CD4-positive, alpha-beta T cell (primary cell): ENCODE measurements at regions of chr18 and their contacts with region 1.

Region 1: GRCh38 chr18:77101410-77102258 is 30.9 kb downstream of the MBP start:
- DNase-seq: peak in 6 of 14 experiments; percentile 29 to 77 (median 64)
- ATAC-seq: peak; percentile 15
- H3K4me3 ChIP-seq: peak overlapping the region; percentile 25
- H3K4me3 Mint-ChIP-seq: peak overlapping the region; percentile 77
- H3K27ac ChIP-seq: peak overlapping the region; percentile 74 to 89
- H3K27ac Mint-ChIP-seq: peak overlapping the region; percentile 97
- H3K4me1 ChIP-seq: peaks cover 95% of the 10 kb centered on the region
- H3K4me1 Mint-ChIP-seq: peaks cover 96% of the 10 kb centered on the region
- H3K27me3 ChIP-seq: no peaks in the 10 kb centered on the region
- H3K27me3 Mint-ChIP-seq: no peaks in the 10 kb centered on the region
- CTCF ChIP-seq: no peak

Region 2: DNA sequence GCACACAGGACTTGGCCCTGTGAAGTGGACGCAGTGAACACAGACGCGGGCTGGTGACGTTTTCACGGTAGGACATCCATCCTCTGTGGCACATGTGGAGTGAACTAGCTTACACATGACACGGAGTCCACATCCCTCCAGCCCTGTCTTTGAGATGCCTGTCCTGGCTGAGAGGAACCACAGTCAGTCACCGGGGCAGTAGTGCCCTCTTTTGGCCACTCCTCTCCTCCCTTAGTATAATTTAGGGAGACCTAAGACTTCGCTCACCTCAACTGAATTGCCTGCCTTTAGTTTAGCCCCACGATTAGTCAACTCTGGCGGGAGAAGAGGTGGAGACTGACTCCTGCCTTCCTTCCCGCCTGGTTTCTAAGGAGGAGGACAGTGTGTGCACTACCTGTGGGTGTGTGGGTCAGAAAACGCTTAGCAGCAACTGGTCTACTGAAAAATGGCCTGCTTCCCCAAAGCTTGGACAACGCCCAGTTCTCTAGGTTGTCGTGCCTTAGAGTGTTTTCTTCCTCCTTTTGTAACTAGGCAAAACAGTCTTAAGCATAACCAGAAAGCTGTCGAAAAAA is 39.6 kb before region 1 on chr18:
- CTCF ChIA-PET with region 1: interaction called, 14 read pairs
- POLR2A ChIA-PET with region 1: interaction called, 33 read pairs
- intact Hi-C with region 1: loop called (anchors 1 to 2 kb)
- DNase-seq: peak in 7 of 14 experiments; percentile 24 to 74 (median 52)
- ATAC-seq: peak; percentile 9
- H3K4me3 ChIP-seq: peak overlapping the region; percentile 28
- H3K4me3 Mint-ChIP-seq: peak overlapping the region; percentile 55
- H3K27ac ChIP-seq: peak overlapping the region; percentile 89 to 93
- H3K27ac Mint-ChIP-seq: peak overlapping the region; percentile 98
- H3K4me1 ChIP-seq: peaks cover 91% of the 10 kb centered on the region
- H3K4me1 Mint-ChIP-seq: peaks cover 82% of the 10 kb centered on the region
- H3K27me3 ChIP-seq: no peaks in the 10 kb centered on the region
- H3K27me3 Mint-ChIP-seq: no peaks in the 10 kb centered on the region
- CTCF ChIP-seq: no peak

Region 3: DNA sequence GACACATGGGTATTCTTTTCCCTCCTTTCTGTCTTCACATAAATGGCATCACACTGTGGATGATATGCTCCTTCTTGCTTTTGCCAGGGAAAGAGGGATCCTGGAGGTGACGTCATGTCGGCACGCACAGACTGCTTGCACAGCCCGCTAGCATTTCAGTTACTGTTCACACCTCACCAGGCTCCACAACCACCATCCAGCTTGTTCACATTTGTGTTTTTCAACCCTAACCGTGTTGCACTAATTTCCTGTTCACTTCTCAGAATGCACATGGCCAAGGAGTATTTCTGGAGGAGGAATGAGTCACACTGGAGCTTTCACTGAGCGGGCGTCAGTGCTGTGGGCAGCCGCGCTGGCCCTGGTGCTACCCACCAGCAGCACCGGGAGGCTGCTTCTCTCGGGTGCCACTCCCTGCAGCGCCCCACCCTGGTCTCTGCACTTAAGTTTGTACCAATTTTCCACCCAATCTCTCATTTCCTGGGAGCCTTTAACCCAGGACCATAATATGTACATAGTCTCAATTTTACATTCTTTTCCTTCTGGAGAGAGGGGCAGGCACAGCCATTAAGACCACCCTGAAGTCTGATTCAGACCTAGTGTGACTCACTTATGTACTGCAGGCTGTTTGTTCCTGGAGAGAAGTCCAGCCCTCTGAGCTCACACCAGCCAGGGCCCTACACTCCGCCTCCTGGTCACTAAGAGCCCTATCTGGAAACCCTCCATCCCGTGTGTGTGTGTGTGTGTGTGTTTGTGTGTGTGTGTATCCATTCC is 34.2 kb before region 1 on chr18:
- CTCF ChIA-PET with region 1: interaction called, 14 read pairs
- POLR2A ChIA-PET with region 1: interaction called, 33 read pairs
- intact Hi-C with region 1: loop called (anchors 1 to 2 kb)
- DNase-seq: peak in 12 of 14 experiments; percentile 52 to 87 (median 62)
- ATAC-seq: peak; percentile 18
- H3K4me3 ChIP-seq: peak overlapping the region; percentile 1
- H3K4me3 Mint-ChIP-seq: peak overlapping the region; percentile 84
- H3K27ac ChIP-seq: peak overlapping the region; percentile 56 to 81
- H3K27ac Mint-ChIP-seq: peak overlapping the region; percentile 98
- H3K4me1 ChIP-seq: peaks cover 96% of the 10 kb centered on the region
- H3K4me1 Mint-ChIP-seq: peaks cover 100% of the 10 kb centered on the region
- H3K27me3 ChIP-seq: no peaks in the 10 kb centered on the region
- H3K27me3 Mint-ChIP-seq: no peaks in the 10 kb centered on the region
- CTCF ChIP-seq: no peak

Region 4: GRCh38 chr18:77114415-77115191 is 13.0 kb after region 1 on chr18:
- CTCF ChIA-PET with region 1: no interaction called
- POLR2A ChIA-PET with region 1: interaction called, 19 read pairs
- intact Hi-C with region 1: no loop called
- DNase-seq: peak in 5 of 14 experiments; percentile 36 to 86 (median 39)
- ATAC-seq: peak; percentile 27
- H3K4me3 ChIP-seq: no peak overlapping the region
- H3K4me3 Mint-ChIP-seq: peak overlapping the region; percentile 68
- H3K27ac ChIP-seq: peak overlapping the region; percentile 54 to 69
- H3K27ac Mint-ChIP-seq: peak overlapping the region; percentile 97
- H3K4me1 ChIP-seq: peaks cover 79% of the 10 kb centered on the region
- H3K4me1 Mint-ChIP-seq: peaks cover 87% of the 10 kb centered on the region
- H3K27me3 ChIP-seq: no peaks in the 10 kb centered on the region
- H3K27me3 Mint-ChIP-seq: no peaks in the 10 kb centered on the region
- CTCF ChIP-seq: no peak